ENCODE measurements at regions of chr12 and their contacts with region 1.

Region 1: DNA sequence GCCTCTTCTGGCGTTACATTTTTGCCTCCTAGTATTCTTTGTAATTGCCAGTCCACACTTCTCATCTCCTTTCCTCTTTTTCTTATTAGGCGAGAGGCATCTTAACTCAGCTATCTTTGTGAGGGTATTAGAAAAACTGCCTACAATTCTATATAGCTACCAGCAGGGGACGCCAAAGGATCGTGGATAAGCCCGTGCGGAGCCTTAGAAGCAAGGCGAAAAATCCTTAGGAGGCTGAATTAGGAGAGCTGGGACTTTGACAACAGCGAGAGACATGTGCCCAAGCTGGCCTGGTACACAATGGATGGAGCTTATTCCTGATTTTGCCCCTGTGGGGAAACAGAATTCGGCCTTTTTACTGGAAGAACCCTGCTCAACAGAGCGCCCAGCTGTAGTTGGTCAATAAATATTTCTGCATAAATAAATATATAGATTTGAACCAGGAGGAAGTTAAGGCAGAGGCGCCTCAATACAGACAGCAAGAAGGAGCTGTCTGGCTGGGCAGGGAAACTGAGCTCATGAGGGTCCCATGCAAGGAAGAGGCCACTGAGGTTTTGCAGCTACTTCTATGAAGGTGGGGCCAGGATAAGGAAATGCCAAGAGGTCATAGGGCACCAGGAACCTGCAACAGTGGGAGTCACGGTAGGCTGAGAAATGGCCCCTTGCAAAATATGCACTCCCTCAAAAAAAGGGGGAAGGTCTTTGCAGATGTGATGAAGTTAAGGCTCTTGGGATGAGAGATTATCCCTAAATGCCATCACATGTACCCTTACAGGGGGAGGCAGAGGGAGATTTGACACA is 14.6 kb upstream of the RBM19 start:
- DNase-seq: no peak
- ATAC-seq: peak; percentile 87
- H3K4me3 ChIP-seq: no peak overlapping the region
- H3K27ac ChIP-seq: no peak overlapping the region
- H3K4me1 ChIP-seq: no peaks in the 10 kb centered on the region
- H3K27me3 ChIP-seq: no peaks in the 10 kb centered on the region
- CTCF ChIP-seq: peak; percentile 97
- EP300 ChIP-seq: no peak
- POLR2A ChIP-seq: no peak
- RAD21 ChIP-seq: peak; percentile 98

Region 2: GRCh38 chr12:113996026-113996425 is 15.3 kb after region 1 on chr12:
- CTCF ChIA-PET with region 1: interaction called, 13 read pairs
- POLR2A ChIA-PET with region 1: interaction called, 5 read pairs
- RAD21 ChIA-PET with region 1: interaction called, 3 read pairs
- SMC1A ChIA-PET with region 1: interaction called, 6 read pairs
- in situ Hi-C with region 1: no loop called
- intact Hi-C with region 1: no loop called
- DNase-seq: no peak
- ATAC-seq: peak; percentile 59
- H3K4me3 ChIP-seq: no peak overlapping the region
- H3K27ac ChIP-seq: no peak overlapping the region
- H3K4me1 ChIP-seq: no peaks in the 10 kb centered on the region
- H3K27me3 ChIP-seq: peaks cover 0 to 4% of the 10 kb centered on the region in 2 experiments; a peak in 1 of 4 replicates
- CTCF ChIP-seq: peak in 1 of 3 experiments; percentile 19; a peak in 2 of 6 replicates
- EP300 ChIP-seq: no peak
- POLR2A ChIP-seq: no peak
- RAD21 ChIP-seq: no peak

Region 3: GRCh38 chr12:114508529-114509129 is 527.9 kb after region 1 on chr12:
- CTCF ChIA-PET with region 1: interaction called, 114 read pairs
- POLR2A ChIA-PET with region 1: interaction called, 4 read pairs
- RAD21 ChIA-PET with region 1: interaction called, 48 read pairs
- SMC1A ChIA-PET with region 1: interaction called, 65 read pairs
- in situ Hi-C with region 1: loop called (anchors 5 kb)
- intact Hi-C with region 1: loop called (anchors 1 kb)
- DNase-seq: peak; percentile 16
- ATAC-seq: peak; percentile 84
- H3K4me3 ChIP-seq: no peak overlapping the region
- H3K27ac ChIP-seq: no peak overlapping the region
- H3K4me1 ChIP-seq: no peaks in the 10 kb centered on the region
- H3K27me3 ChIP-seq: no peaks in the 10 kb centered on the region
- CTCF ChIP-seq: peak; percentile 62 to 82 (median 72); a peak in 4 of 6 replicates
- EP300 ChIP-seq: no peak
- POLR2A ChIP-seq: no peak
- RAD21 ChIP-seq: peak; percentile 79

Region 4: DNA sequence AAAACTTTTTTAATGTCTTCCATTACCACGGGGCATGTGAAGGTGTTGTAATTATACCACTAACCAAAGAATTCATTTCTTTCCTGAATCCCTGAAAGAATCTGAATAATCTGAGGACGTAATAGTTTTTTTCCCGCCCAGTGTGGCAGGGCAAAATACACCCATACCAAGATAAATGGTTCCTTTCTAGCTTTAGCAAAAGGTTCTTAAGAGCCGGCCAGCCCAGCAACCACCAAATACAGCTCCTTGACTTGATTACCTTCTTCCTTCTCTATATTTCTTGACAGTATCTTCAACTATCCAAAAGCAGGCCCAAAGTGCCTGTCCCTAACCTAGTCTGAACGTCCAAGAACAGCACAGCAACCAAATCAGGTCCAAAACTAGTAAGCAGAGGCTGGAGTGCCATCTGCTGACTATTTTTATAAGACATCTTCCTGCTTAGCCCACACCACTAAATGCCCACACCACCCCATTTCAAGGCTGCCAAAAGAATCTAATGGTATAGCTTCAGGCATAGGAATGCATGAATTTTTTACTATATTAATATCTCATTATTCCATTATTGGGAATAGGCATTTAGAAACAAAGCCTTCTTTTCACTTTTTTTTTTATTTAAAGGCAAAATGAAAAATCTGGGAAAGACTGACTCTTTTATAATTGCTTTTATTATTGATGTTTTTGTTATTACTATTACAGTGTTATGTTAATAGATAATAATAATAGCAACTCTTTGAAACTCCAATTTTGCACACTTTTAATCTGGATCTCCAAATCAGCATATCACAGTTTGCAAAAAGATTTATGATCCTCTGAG is 1772.4 kb after region 1 on chr12:
- CTCF ChIA-PET with region 1: interaction called, 5 read pairs
- POLR2A ChIA-PET with region 1: no interaction called
- RAD21 ChIA-PET with region 1: interaction called, 4 read pairs
- SMC1A ChIA-PET with region 1: interaction called, 3 read pairs
- in situ Hi-C with region 1: no loop called
- intact Hi-C with region 1: loop called (anchors 5 kb)
- DNase-seq: peak; percentile 12
- ATAC-seq: peak; percentile 77
- H3K4me3 ChIP-seq: no peak overlapping the region
- H3K27ac ChIP-seq: no peak overlapping the region
- H3K4me1 ChIP-seq: no peaks in the 10 kb centered on the region
- H3K27me3 ChIP-seq: peaks cover 0 to 2% of the 10 kb centered on the region in 2 experiments; a peak in 1 of 4 replicates
- CTCF ChIP-seq: peak; percentile 41 to 63 (median 62); a peak in 5 of 6 replicates
- EP300 ChIP-seq: no peak
- POLR2A ChIP-seq: no peak
- RAD21 ChIP-seq: peak; percentile 82

Measured in GM12878 (cell line).